ENCODE measurements at regions of chr2 and their contacts with region 1.

Region 1: DNA sequence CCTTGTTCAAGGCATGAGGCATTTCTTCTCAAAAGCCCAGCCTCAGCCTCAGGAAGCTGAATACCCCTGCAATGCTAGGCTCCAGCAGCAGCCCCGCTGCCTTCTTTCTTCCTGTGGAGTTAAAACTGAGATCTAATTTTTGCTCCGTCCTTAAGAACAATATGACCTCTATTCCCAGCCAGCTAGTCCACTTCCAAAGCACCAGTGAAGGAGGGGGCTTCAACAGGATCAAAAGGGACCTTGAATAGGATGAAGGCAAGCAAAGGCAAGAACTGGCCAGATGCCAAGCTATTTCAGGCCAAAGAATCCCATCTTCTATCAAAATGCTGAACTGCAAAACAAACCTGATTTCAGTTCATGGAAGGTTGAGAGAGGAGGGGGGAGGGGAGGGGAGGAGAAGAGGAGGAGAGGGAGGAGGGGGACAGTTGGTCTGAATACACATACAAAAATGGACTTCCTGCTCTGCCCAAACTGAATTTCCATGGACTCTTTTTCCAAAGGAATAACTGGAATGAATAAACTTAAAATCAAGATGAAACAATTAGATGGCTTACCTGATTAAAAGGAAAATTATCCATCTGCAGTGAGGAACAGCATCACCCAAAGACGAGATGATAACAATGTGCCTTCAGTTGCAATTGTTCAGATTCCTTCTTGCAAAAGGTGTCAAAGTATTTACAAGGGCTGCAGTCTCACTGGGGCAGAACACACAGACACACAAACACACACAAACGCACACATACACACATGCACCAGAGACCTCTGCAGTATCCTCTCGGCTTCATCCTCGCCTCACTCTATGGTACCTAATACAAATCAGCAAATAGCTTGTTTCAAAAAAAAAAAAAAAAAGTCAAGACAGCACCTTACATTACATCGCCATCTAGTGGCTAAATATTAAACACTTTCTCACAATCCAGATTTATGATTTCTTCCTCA is at the start of gene SCN1A:
- DNase-seq: peak; percentile 57
- ATAC-seq: no peak
- H3K4me3 ChIP-seq: no peak within 1 kb of the TSS
- H3K4me3 Mint-ChIP-seq: no peak within 1 kb of the TSS
- H3K27ac ChIP-seq: no peak within 1 kb of the TSS
- H3K27ac Mint-ChIP-seq: no peak within 1 kb of the TSS
- H3K4me1 ChIP-seq: no peaks in the 10 kb centered on the region
- H3K4me1 Mint-ChIP-seq: peaks cover 2% of the 10 kb centered on the region
- H3K27me3 ChIP-seq: peaks cover 0 to 3% (median 1%) of the 10 kb centered on the region in 4 experiments
- H3K27me3 Mint-ChIP-seq: peaks cover 23% of the 10 kb centered on the region
- CTCF ChIP-seq: peak; percentile 86
- total RNA-seq, gene SCN1A: not detected in 2 replicates

Region 2: DNA sequence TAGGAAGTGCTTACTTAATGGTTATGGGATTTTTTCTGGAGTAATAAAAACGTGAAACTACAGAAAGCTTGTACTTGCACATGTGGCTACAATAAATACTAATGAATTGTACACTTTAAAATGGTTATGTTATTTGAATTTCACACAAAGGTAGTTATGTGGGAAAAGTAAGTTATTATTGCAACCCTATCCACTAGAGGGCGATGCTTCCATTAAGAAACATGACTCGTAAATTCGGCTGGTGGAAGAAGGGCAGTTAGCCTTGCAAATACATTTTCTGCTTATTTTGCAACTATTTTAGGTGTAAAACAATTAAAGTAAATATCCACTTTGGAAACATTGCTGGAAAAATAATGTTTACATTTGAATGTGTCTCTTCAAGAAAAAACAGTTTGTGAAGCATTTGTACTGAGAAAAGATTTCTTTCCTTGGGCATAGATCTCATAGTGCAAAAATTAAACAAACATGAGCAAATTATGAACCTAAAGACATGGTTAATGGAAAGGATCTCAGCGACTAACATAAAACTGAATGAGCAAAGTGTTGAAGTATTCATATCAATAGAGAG is 726.1 kb before region 1 on chr2:
- CTCF ChIA-PET with region 1: interaction called, 9 read pairs
- POLR2A ChIA-PET with region 1: no interaction called
- intact Hi-C with region 1: loop called (anchors 2 kb)
- DNase-seq: peak; percentile 75
- ATAC-seq: no peak
- H3K4me3 ChIP-seq: no peak overlapping the region
- H3K4me3 Mint-ChIP-seq: no peak overlapping the region
- H3K27ac ChIP-seq: no peak overlapping the region
- H3K27ac Mint-ChIP-seq: no peak overlapping the region
- H3K4me1 ChIP-seq: no peaks in the 10 kb centered on the region
- H3K4me1 Mint-ChIP-seq: no peaks in the 10 kb centered on the region
- H3K27me3 ChIP-seq: no peaks in the 10 kb centered on the region
- H3K27me3 Mint-ChIP-seq: peaks cover 3% of the 10 kb centered on the region
- CTCF ChIP-seq: peak; percentile 83

Region 3: GRCh38 chr2:165953655-165954606 is 173.6 kb before region 1 on chr2 and contains the start of gene TTC21B:
- CTCF ChIA-PET with region 1: interaction called, 12 read pairs
- POLR2A ChIA-PET with region 1: no interaction called
- intact Hi-C with region 1: loop called (anchors 1 kb)
- DNase-seq: peak; percentile 93
- ATAC-seq: peak; percentile 96
- H3K4me3 ChIP-seq: peak within 1 kb of the TSS; percentile 62 to 82 (median 71)
- H3K4me3 Mint-ChIP-seq: peak within 1 kb of the TSS; percentile 53
- H3K27ac ChIP-seq: peak within 1 kb of the TSS; percentile 77
- H3K27ac Mint-ChIP-seq: no peak within 1 kb of the TSS
- H3K4me1 ChIP-seq: peaks cover 19 to 23% of the 10 kb centered on the region in 2 donors
- H3K4me1 Mint-ChIP-seq: peaks cover 12% of the 10 kb centered on the region
- H3K27me3 ChIP-seq: no peaks in the 10 kb centered on the region
- H3K27me3 Mint-ChIP-seq: no peaks in the 10 kb centered on the region
- CTCF ChIP-seq: peak; percentile 90
- total RNA-seq, gene TTC21B: 41.5 and 50.7 TPM in 2 replicates

Region 4: GRCh38 chr2:166112193-166112605 is 15.3 kb before region 1 on chr2:
- CTCF ChIA-PET with region 1: interaction called, 13 read pairs
- POLR2A ChIA-PET with region 1: no interaction called
- intact Hi-C with region 1: no loop called
- DNase-seq: no peak
- ATAC-seq: no peak
- H3K4me3 ChIP-seq: no peak overlapping the region
- H3K4me3 Mint-ChIP-seq: no peak overlapping the region
- H3K27ac ChIP-seq: no peak overlapping the region
- H3K27ac Mint-ChIP-seq: no peak overlapping the region
- H3K4me1 ChIP-seq: no peaks in the 10 kb centered on the region
- H3K4me1 Mint-ChIP-seq: no peaks in the 10 kb centered on the region
- H3K27me3 ChIP-seq: no peaks in the 10 kb centered on the region
- H3K27me3 Mint-ChIP-seq: no peaks in the 10 kb centered on the region
- CTCF ChIP-seq: no peak

Measured in B cell (primary cell).